Endothelial cell of umbilical vein (primary cell): ENCODE measurements at regions of chr19 and their contacts with region 1.

Region 1: DNA sequence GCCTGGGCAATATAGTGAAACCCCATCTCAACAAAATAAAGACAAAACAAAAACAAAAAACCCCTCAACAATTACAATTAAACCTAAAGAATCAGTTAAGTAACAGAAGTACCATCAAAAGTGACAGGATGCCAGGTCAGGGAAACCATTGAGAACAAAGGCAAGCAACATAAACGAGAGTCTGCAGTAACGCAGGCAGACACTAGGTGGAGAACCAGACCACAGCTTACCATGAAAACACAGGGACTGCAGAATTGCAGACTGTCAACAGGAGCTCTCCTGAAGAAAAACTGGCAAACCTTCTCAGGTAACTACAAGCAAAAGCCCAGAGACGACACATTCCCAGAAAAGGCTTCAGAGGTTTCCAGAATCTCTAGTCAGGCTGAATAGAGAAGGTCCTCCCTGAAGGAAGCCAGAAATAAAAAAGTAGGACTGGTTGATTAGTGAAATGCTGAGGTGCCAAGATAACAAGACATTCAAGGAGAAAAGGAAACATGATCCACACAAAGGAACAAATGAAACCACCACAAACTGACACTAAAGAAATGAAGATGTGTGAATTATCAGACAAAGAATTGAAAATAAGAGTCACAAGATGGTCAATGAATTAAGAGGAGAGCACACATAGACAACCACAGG is 2.2 kb upstream of the ZNF665 start:
- DNase-seq: peak; percentile 82
- H3K4me3 ChIP-seq: no peak overlapping the region
- H3K27ac ChIP-seq: no peak overlapping the region
- H3K4me1 ChIP-seq: peaks cover 2% of the 10 kb centered on the region
- H3K27me3 ChIP-seq: no peaks in the 10 kb centered on the region
- CTCF ChIP-seq: peak; percentile 83
- POLR2A ChIP-seq: no peak

Region 2: DNA sequence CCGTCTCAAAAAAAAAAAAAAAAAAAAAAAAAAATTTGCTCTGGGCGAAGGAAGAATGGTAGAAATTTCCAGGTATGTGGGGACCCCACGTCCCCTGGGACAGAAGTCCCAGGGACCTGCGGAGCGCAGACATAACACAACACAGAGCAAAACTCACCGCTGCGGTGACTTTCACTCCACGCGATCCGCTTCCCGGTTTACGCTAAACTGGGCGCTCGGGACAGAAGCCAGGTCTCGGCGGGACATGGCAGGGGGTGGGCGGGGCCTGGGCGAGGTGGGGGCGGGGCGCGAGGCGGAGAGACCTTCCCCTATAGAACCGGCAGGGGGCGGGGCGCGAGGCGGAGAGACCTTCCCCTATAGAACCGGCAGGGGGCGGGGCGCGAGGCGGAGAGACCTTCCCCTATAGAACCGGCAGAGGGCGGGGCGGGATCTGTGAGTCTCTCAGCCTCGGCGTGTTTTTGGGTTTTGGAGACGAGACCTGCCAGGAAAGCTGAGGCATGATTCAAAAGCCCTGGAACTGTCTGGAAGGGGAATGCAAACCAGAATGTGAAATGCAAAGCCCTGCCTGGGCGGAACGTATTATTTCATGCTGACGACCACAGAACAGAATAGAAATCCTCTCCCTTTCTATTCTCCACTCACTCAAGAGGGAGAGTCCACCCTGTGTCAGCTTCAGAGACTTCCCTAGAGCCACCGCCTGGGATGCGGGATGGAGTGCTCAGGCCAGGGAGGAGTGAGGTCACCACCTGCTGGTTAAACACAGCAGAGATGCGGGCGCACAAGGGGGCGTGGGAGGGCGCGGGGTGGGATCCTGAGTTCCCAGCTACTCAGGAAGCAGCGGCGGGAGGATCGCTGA is 201.8 kb before region 1 on chr19:
- CTCF ChIA-PET with region 1: interaction called, 3 read pairs
- POLR2A ChIA-PET with region 1: no interaction called
- dilution Hi-C with region 1: no loop called
- intact Hi-C with region 1: loop called (anchors 5 kb)
- DNase-seq: peak; percentile 76
- H3K4me3 ChIP-seq: peak overlapping the region; percentile 51 to 71 (median 64)
- H3K27ac ChIP-seq: peak overlapping the region; percentile 81
- H3K4me1 ChIP-seq: peaks cover 20% of the 10 kb centered on the region
- H3K27me3 ChIP-seq: no peaks in the 10 kb centered on the region
- CTCF ChIP-seq: peak in 1 of 2 donors; percentile 59
- POLR2A ChIP-seq: peak; percentile 69

Region 3: DNA sequence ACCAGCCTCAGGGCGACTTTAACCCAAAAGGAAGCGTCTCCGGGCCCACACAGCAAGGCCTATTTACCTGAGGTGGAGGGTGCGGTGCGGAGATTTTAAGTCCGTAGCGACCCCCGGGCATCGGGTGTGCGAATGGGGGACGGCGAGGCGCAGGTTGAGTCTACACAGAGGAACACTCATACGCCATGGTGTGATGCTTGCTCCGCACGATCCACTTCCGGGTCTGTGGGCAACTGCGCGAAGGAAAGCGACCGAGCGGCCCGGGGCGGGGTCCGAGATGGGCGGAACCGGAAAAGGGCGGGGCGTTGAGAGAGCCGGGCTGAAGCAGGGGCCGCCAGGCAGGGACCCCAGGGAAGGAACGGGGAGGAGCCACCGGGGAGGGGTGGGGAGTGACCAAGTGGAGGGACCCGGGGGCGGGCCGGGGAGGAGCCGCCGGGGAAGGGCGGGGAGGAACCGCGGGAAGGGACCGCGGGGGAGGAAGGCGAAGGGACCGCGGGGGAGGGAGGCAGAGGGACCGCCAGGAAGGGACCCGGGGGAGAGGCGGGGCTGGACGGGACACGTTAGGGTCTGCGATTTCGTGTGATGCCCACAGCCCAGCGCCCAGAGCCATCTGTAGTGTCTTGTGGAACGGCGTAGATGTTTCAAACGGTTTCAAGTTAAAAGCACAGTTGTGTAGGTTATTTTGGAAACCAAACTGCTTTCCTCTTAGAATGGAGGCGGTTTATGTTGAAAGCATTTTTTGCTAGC is 92.0 kb before region 1 on chr19 and contains the start of gene ZNF160:
- CTCF ChIA-PET with region 1: interaction called, 3 read pairs
- POLR2A ChIA-PET with region 1: no interaction called
- dilution Hi-C with region 1: no loop called
- intact Hi-C with region 1: loop called (anchors 1 kb)
- DNase-seq: peak; percentile 98
- H3K4me3 ChIP-seq: peak within 1 kb of the TSS; percentile 79 to 93 (median 90)
- H3K27ac ChIP-seq: peak within 1 kb of the TSS; percentile 94
- H3K4me1 ChIP-seq: peaks cover 11% of the 10 kb centered on the region
- H3K27me3 ChIP-seq: no peaks in the 10 kb centered on the region
- CTCF ChIP-seq: no peak
- POLR2A ChIP-seq: peak; percentile 72
- total RNA-seq, gene ZNF160: 16.4 and 19.7 TPM in 2 replicates

Region 4: DNA sequence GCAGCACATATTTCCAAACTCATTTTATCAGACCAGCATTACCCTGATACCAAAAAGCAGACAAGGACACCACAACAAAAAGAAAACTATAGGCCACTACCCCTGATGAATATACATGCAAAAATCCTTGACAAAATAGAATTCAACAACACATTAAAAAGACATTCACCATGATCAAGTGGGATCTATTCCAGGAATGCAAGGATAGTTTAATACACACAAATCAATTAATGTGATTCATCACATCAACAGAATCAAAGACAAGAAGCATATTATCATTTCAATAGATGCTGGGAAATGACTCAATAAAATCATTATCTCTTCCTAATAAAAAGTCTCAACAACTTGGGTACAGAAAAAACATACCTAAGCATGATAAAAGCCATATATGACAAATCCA is 47.7 kb before region 1 on chr19:
- CTCF ChIA-PET with region 1: no interaction called
- POLR2A ChIA-PET with region 1: no interaction called
- dilution Hi-C with region 1: no loop called
- intact Hi-C with region 1: no loop called
- DNase-seq: no peak
- H3K4me3 ChIP-seq: no peak overlapping the region
- H3K27ac ChIP-seq: no peak overlapping the region
- H3K4me1 ChIP-seq: no peaks in the 10 kb centered on the region
- H3K27me3 ChIP-seq: no peaks in the 10 kb centered on the region
- CTCF ChIP-seq: no peak
- POLR2A ChIP-seq: no peak

Region 5: DNA sequence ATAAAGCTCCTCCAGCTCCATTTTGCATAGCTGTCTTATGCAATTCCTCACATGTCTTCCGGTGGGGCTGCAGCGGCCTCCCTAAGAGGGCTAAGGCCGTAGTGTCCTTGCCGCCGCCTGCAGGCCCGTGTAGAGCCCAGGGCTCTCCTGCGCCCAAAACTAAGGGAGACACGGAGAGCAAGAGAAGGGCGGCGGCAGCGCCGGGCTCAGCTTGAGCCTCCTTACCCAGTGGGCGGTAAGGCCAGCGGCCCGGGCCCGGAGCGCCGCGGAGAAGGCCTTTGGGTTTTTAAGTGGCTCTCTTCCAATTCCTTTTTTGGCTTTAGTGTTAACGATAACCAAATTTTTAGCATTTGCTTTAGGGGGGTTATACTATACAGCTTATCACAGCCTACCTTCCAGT is 29.2 kb after region 1 on chr19:
- CTCF ChIA-PET with region 1: no interaction called
- POLR2A ChIA-PET with region 1: no interaction called
- dilution Hi-C with region 1: no loop called
- intact Hi-C with region 1: no loop called
- DNase-seq: no peak
- H3K4me3 ChIP-seq: no peak overlapping the region
- H3K27ac ChIP-seq: no peak overlapping the region
- H3K4me1 ChIP-seq: no peaks in the 10 kb centered on the region
- H3K27me3 ChIP-seq: no peaks in the 10 kb centered on the region
- CTCF ChIP-seq: no peak
- POLR2A ChIP-seq: no peak

Region 6: DNA sequence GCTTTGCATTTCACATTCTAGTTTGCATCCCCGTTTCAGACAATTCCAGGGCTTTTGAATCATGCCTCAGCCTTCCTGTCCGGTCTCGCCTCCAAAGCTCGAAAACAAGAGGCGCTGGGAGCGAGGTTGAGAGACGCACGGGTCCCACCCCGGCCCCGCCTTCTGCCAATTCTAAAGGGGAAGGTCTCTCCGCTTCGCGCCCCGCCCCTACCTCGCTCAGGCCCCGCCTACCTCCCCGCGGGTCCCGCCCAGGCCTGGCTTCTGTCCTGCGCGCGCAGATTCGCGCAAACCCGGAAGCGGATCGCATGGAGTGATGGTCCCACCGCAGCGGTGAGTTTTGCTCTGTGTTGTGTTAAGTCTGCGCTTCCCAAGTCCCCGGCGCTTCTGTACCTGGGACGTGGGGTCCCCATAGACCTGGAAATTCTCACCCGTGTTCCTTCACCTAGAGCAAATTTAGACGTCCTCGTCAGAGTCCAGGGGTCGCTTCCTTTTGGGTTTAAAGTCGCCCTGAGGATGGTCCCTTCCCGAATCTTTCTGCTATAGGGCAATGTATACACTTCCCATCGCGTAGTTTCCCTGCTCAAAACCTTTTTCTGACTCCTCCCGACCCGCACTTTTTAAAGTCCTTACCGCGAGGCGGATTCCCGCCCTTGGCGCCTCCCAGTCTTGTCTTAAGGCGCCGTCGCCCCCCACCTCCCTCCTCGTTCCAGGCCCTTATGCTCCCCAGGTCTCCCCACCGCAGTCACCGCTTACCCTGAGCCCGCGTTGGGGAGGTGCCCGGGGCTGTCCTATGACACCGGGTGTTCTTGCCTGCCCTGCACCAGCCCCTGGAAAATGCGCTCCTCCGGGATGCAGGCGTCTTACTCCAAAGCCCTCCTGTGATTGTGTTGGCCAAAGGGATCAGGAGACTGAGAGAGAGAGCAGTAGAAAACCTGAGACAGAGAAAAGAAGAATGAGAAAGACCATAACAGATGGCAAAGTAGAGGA is 138.4 kb after region 1 on chr19 and contains the start of gene ZNF845:
- CTCF ChIA-PET with region 1: interaction called, 7 read pairs
- POLR2A ChIA-PET with region 1: no interaction called
- dilution Hi-C with region 1: no loop called
- intact Hi-C with region 1: loop called (anchors 1 kb)
- DNase-seq: peak; percentile 95
- H3K4me3 ChIP-seq: peak within 1 kb of the TSS; percentile 55 to 99 (median 98)
- H3K27ac ChIP-seq: peak within 1 kb of the TSS; percentile 84
- H3K4me1 ChIP-seq: peaks cover 2% of the 10 kb centered on the region
- H3K27me3 ChIP-seq: no peaks in the 10 kb centered on the region
- CTCF ChIP-seq: no peak
- POLR2A ChIP-seq: peak; percentile 62
- total RNA-seq, gene ZNF845: 4.6 and 5.0 TPM in 2 replicates

Region 7: GRCh38 chr19:53394974-53395839 is 199.8 kb after region 1 on chr19 and contains the start of gene ZNF765:
- CTCF ChIA-PET with region 1: interaction called, 8 read pairs
- POLR2A ChIA-PET with region 1: no interaction called
- dilution Hi-C with region 1: no loop called
- intact Hi-C with region 1: loop called (anchors 10 kb)
- DNase-seq: peak; percentile 91
- H3K4me3 ChIP-seq: peak within 1 kb of the TSS; percentile 88 to 95 (median 93)
- H3K27ac ChIP-seq: peak within 1 kb of the TSS; percentile 71
- H3K4me1 ChIP-seq: peaks cover 5% of the 10 kb centered on the region
- H3K27me3 ChIP-seq: no peaks in the 10 kb centered on the region
- CTCF ChIP-seq: peak in 1 of 2 donors; percentile 66
- POLR2A ChIP-seq: peak; percentile 72
- total RNA-seq, gene ZNF765: 7.3 and 7.7 TPM in 2 replicates

Region 8: DNA sequence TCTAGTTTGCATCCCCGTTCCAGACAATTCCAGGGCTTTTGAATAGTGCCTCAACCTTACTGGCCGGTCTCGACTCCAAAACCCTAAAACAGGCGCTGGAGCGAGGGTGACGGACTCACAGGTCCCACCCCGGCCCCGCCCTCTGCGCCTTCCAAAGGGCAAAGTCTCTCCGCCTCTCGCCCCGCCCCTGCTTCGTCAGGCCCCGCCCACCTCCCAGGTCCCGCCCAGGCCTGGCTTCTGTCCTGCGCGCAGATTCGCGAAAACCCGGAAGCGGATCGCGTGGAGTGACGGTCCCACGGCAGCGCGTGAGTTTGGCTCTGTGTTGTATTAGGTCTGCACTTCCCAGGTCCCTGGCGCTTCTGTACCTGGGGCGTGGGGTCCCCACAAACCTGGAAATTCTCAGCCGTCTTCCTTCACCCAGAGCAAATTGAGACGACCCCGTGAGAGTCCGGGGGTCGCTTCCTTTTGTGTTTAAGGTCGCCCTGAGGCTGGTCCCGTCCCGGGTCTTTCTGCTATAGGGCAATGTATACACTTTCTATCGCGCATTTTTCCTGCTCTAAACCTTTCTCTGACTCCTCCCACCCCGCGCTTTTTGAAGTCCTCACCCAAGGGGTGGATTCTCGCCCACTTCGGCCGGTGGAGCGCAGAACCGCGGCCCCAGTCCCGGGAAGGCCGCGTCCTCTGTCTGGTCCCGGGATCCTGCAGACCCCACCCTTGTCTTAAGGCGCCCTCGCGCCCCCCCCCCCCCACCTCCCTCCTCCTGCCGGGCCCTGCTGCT is 272.3 kb after region 1 on chr19 and contains the start of gene ZNF813:
- CTCF ChIA-PET with region 1: no interaction called
- POLR2A ChIA-PET with region 1: no interaction called
- dilution Hi-C with region 1: no loop called
- intact Hi-C with region 1: loop called (anchors 5 kb)
- DNase-seq: peak; percentile 89
- H3K4me3 ChIP-seq: peak within 1 kb of the TSS; percentile 68 to 86 (median 81)
- H3K27ac ChIP-seq: peak within 1 kb of the TSS; percentile 69
- H3K4me1 ChIP-seq: peaks cover 4% of the 10 kb centered on the region
- H3K27me3 ChIP-seq: no peaks in the 10 kb centered on the region
- CTCF ChIP-seq: no peak
- POLR2A ChIP-seq: peak; percentile 71
- total RNA-seq, gene ZNF813: 2.3 TPM in 2 replicates